Prostate gland (tissue), 2 donors: ENCODE measurements at regions of chr19 and their contacts with region 1.

Region 1: DNA sequence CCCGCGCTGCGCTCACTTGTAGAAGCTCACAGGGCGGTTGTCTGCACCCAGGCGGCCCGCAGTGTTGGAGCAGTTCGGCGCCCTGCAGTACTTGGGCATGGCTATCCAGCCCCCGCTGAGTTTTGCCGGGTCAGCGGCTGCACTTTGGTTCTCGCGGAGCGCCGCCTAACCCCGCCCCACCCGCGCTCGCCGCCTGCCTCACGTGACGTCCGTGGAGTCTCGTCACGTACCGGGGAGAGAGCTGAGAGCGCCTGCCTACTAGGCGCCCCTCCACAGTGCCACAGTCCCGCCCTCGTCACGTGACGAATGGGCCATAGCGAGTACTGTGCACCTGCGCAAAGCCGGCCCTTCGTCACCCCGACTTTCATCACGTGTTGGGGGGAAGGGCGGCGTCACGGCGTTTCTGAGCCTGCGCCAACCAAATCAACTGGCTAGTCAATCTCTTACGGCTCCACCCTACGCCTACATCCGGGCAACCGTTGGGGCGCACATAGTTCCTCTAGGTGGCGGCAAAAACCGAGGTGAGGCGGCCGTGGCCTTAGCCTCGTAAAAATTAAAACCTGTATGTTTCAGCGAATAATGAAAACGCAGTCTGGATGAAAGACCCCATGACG is at the start of gene THAP8:
- DNase-seq: peak; percentile 99
- H3K4me3 ChIP-seq: peak within 1 kb of the TSS; percentile 52 to 59
- H3K27ac ChIP-seq: peak within 1 kb of the TSS; percentile 92 to 97
- H3K4me1 ChIP-seq: no peaks in the 10 kb centered on the region
- H3K27me3 ChIP-seq: no peaks in the 10 kb centered on the region
- CTCF ChIP-seq: peak in 3 of 4 experiments; percentile 49 to 84 (median 61)
- POLR2A ChIP-seq: peak; percentile 73
- total RNA-seq, gene THAP8: 12.0 to 21.9 TPM

Region 2: DNA sequence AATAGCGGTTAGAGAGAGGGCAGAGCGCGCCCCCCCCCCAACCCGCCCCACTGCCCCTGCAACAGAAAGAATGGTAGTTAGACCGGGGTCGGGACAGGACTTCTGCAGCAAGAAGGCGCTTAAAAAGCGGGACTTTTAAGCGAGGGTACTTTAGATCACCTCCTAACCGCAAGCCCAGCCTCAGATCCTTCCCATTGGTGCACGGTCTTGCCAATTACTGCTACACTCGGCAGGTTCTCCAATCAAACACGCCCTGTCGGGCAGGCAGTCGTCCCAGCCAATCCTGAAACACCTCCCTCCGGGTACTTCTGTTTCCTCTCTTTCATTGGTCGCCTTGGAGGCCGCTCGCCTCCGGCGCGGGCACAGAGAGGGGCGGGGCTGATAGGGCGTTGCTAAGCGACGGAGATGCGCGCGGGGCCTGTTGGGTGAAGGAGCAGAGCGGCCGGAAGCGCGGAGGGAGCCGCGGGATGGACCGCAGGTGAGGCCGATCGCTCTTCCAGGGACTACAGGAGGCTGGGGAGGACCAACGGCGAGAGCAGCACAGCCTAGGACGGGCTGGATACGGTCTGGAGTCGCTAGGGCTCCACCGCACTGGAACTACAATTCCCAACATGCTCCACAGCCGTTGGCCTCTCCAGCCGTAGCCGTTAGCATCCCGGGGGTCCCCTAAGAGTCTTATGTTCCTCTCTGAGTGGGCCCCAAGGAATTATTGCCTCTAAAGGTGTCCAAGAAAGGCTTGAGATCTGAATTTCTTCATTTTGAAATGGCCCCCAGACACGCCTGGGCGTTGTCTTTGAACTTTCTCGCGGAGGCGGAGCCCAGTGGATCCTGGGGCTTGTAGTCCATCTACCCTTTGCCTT is 296.2 kb before region 1 on chr19 and contains the start of gene PROSER3:
- intact Hi-C with region 1: loop called (anchors 10 kb)
- DNase-seq: peak; percentile 99
- H3K4me3 ChIP-seq: peak within 1 kb of the TSS; percentile 69 to 97
- H3K27ac ChIP-seq: peak within 1 kb of the TSS; percentile 88 to 93
- H3K4me1 ChIP-seq: peaks cover 6% of the 10 kb centered on the region
- H3K27me3 ChIP-seq: no peaks in the 10 kb centered on the region
- CTCF ChIP-seq: peak in 1 of 4 experiments; percentile 18
- POLR2A ChIP-seq: peak; percentile 72
- total RNA-seq, gene PROSER3: 13.6 to 19.2 TPM

Region 3: DNA sequence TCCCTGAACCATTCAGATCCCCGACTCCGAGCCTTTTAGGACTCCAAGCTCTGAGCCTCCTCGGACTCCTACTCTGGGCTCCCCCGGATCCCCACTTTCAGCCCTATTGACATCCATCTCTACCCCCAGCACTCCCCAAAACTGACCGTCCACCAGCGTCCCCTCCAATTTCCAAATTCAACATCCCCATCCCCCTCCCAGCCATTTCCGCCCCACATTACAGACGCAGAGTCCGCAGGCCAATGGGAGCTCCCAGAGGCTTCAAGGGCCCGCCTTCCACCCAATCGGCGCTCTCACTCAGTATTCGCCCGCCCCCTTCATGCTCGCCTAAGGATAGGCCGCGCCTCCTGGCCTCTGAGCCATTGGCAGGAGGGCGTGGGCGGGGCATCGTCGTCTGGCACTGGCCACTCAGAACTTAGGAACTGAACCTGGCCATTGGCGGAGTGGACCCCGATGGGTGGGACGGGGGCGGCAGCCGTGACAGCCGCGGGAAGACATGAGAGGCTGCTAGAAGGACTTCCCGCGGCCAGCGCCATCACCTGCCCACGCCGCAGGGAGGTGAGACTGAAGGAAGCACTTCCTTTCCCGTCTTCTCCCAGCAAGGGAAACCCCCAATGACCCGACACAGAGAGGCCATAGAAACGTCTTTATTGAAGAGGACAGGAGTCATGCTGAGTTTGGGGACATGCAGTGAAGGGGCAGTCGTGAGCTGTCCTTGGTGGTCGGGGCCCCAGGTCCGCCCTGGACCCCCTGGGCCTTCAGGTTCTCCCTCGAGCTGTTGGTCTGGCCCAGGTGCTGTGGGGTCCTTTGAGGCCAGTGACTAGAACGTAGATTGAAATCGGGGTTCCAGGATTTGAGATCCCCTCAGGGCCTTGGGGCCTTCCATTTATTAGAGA is 39.9 kb before region 1 on chr19 and contains the start of gene ALKBH6:
- intact Hi-C with region 1: loop called (anchors 5 kb)
- DNase-seq: peak; percentile 99
- H3K4me3 ChIP-seq: peak within 1 kb of the TSS; percentile 44 to 57
- H3K27ac ChIP-seq: peak within 1 kb of the TSS; percentile 70
- H3K4me1 ChIP-seq: peaks cover 4% of the 10 kb centered on the region
- H3K27me3 ChIP-seq: no peaks in the 10 kb centered on the region
- CTCF ChIP-seq: no peak
- POLR2A ChIP-seq: peak; percentile 54
- total RNA-seq, gene ALKBH6: 42.0 to 49.0 TPM

Region 4: DNA sequence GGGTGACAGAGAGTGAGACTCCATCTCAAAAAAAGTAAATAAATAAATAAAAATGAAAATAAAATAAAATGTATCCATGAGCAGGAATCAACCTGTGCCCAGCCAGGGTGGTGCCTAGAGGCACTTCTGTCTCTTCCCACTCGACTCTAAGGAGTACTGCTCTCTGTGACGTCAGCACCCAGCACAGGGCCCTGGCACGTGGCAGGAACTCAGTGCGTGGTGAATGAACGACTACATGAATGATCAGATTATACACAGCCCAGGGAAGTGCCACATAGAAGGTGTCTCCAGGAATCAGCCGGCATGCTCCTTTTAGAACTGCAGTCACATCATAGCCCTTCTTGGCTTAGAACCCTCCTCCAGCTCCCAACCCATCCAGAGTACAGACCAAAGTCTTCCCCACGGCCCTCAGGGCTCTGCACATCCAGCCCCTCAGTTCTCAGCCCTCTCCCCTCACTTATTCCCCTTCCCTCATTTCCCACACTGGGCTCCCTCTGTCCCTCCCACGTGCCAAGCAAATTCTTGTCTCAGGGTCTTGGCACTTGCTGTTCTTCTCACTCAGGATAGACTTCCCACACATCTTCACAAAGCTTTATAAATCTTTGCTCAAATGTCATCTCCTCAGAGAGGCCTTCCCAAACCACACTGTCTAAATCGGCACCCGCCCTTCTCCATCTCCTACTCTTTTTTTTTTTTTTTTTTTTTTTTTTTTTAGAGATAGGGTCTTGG is 25.7 kb before region 1 on chr19:
- intact Hi-C with region 1: loop called (anchors 2 kb)
- DNase-seq: no peak
- H3K4me3 ChIP-seq: no peak overlapping the region
- H3K27ac ChIP-seq: no peak overlapping the region
- H3K4me1 ChIP-seq: no peaks in the 10 kb centered on the region
- H3K27me3 ChIP-seq: no peaks in the 10 kb centered on the region
- CTCF ChIP-seq: no peak
- POLR2A ChIP-seq: no peak

Region 5: DNA sequence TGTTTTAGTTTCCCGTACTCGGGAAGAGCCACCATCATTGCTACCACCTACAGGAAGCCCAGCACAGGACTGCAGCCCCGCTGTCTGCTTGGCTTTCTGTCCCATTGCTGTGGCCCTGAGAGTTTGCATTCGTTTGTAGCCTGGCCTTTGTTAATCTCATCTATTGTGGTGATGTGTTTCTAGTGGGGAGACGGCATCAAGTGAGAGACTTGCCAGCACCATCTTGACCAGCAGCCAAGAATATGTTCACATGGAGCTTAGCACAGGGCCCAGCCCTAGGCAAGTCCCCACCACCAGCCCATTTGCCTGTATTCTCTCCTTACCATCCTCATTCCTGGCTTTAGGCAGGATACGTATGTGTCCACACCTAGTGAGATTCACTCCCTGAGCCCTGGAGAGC is 39.5 kb after region 1 on chr19:
- intact Hi-C with region 1: no loop called
- DNase-seq: no peak
- H3K4me3 ChIP-seq: no peak overlapping the region
- H3K27ac ChIP-seq: no peak overlapping the region
- H3K4me1 ChIP-seq: no peaks in the 10 kb centered on the region
- H3K27me3 ChIP-seq: no peaks in the 10 kb centered on the region
- CTCF ChIP-seq: no peak
- POLR2A ChIP-seq: no peak

Region 6: GRCh38 chr19:36114763-36115452 is 60.7 kb after region 1 on chr19 and contains the start of gene POLR2I:
- intact Hi-C with region 1: loop called (anchors 1 kb)
- DNase-seq: peak; percentile 100
- H3K4me3 ChIP-seq: peak within 1 kb of the TSS; percentile 43 to 70
- H3K27ac ChIP-seq: peak within 1 kb of the TSS; percentile 86 to 87
- H3K4me1 ChIP-seq: peaks cover 4% of the 10 kb centered on the region
- H3K27me3 ChIP-seq: no peaks in the 10 kb centered on the region
- CTCF ChIP-seq: peak in 2 of 4 experiments; percentile 23 to 34
- POLR2A ChIP-seq: peak; percentile 49
- total RNA-seq, gene POLR2I: 45.6 to 56.7 TPM

Region 7: DNA sequence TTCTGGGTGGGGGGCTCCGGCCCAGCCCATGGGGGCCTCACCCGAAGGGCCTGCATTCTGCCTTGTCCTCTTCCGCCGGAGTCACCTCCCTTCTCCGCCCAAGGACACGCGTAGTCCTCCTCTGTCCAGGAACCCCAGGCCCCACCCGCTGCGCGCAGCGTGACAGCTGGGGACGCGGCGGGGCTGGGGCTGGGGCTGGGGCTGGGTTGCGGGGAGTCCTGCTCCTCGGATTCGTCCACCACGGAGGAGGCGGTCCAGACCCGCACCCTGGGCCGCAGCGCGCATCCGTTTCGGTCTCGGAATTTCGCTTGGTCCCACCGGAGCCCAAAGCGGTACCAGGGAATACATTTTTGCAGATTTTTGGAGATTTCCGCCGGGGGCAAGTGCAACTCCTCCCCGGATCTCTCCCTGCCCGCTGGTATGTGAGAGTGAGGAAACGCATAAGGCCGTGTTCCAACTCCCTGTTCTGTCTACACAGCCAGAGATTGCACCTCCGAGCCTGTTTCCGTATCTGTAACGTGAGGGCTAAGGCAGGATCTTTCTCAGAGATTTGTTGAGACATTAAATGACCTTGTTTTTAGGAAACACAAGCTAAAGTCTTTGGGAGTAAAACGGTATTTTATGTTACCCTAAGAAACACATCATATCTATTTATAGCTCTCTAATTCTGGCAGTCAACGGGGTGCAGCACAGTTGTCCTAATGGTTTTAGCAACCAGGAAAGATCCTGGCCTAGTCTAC is 98.3 kb after region 1 on chr19 and contains the start of gene COX7A1:
- intact Hi-C with region 1: no loop called
- DNase-seq: no peak
- H3K4me3 ChIP-seq: peak within 1 kb of the TSS; percentile 32 to 35
- H3K27ac ChIP-seq: peak within 1 kb of the TSS; percentile 77 to 86
- H3K4me1 ChIP-seq: no peaks in the 10 kb centered on the region
- H3K27me3 ChIP-seq: no peaks in the 10 kb centered on the region
- CTCF ChIP-seq: no peak
- POLR2A ChIP-seq: no peak
- total RNA-seq, gene COX7A1: 6.5 to 28.8 TPM